CD4-positive, alpha-beta memory T cell (primary cell): ENCODE measurements at regions of chr1 and their contacts with region 1.

Region 1: GRCh38 chr1:39098546-39099250 is 72.5 kb downstream of the NDUFS5 start:
- DNase-seq: peak; percentile 69 to 83 (median 77)
- H3K4me3 ChIP-seq: no peak overlapping the region
- H3K4me3 Mint-ChIP-seq: peak overlapping the region in 2 of 8 donors; percentile 2 to 20
- H3K27ac ChIP-seq: no peak overlapping the region
- H3K27ac Mint-ChIP-seq: peak overlapping the region in 6 of 7 donors; percentile 3 to 90 (median 74)
- H3K4me1 ChIP-seq: peaks cover 14% of the 10 kb centered on the region
- H3K4me1 Mint-ChIP-seq: peaks cover 11 to 29% (median 15%) of the 10 kb centered on the region in 4 donors
- H3K27me3 ChIP-seq: no peaks in the 10 kb centered on the region
- H3K27me3 Mint-ChIP-seq: no peaks in the 10 kb centered on the region

Region 2: GRCh38 chr1:37636435-37636834 is 1462.3 kb before region 1 on chr1:
- CTCF ChIA-PET with region 1: no interaction called
- POLR2A ChIA-PET with region 1: no interaction called
- intact Hi-C with region 1: no loop called
- DNase-seq: no peak
- H3K4me3 ChIP-seq: no peak overlapping the region
- H3K4me3 Mint-ChIP-seq: no peak overlapping the region
- H3K27ac ChIP-seq: no peak overlapping the region
- H3K27ac Mint-ChIP-seq: no peak overlapping the region
- H3K4me1 ChIP-seq: no peaks in the 10 kb centered on the region
- H3K4me1 Mint-ChIP-seq: peaks cover 7 to 22% (median 12%) of the 10 kb centered on the region in 4 donors
- H3K27me3 ChIP-seq: peaks cover 39% of the 10 kb centered on the region
- H3K27me3 Mint-ChIP-seq: peaks cover 38 to 51% of the 10 kb centered on the region in 2 donors

Region 3: DNA sequence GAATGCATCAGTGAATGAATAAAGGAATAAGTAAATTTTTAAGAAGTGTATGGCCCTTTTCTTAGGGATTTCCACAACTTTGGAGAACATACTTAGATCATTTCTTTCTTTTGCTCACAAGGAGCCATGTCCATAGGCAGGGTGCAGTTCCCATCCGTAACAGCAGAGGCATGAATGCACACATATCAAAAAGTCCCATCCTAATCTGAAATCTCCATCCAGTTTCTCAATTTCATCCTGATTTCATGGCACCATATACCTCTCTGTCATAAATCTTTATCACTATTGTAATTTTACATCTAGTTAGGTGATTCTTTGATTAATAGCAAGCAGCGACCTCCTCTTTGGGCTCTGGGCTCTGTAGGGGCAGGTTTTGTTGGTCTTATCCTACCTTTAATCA is 598.3 kb before region 1 on chr1:
- CTCF ChIA-PET with region 1: no interaction called
- POLR2A ChIA-PET with region 1: no interaction called
- intact Hi-C with region 1: no loop called
- DNase-seq: no peak
- H3K4me3 ChIP-seq: no peak overlapping the region
- H3K4me3 Mint-ChIP-seq: no peak overlapping the region
- H3K27ac ChIP-seq: no peak overlapping the region
- H3K27ac Mint-ChIP-seq: no peak overlapping the region
- H3K4me1 ChIP-seq: no peaks in the 10 kb centered on the region
- H3K4me1 Mint-ChIP-seq: peaks cover 0 to 2% (median under 1%) of the 10 kb centered on the region in 4 donors
- H3K27me3 ChIP-seq: peaks cover 10% of the 10 kb centered on the region
- H3K27me3 Mint-ChIP-seq: peaks cover 12 to 30% of the 10 kb centered on the region in 2 donors

Region 4: GRCh38 chr1:39183503-39184353 is 85.0 kb after region 1 on chr1:
- CTCF ChIA-PET with region 1: interaction called, 94 read pairs
- POLR2A ChIA-PET with region 1: interaction called, 4 read pairs
- intact Hi-C with region 1: loop called (anchors 2 kb)
- DNase-seq: peak; percentile 83 to 95 (median 87)
- H3K4me3 ChIP-seq: no peak overlapping the region
- H3K4me3 Mint-ChIP-seq: peak overlapping the region in 5 of 8 donors; percentile 8 to 53 (median 35)
- H3K27ac ChIP-seq: peak overlapping the region; percentile 70
- H3K27ac Mint-ChIP-seq: peak overlapping the region; percentile 90 to 98 (median 96)
- H3K4me1 ChIP-seq: peaks cover 34% of the 10 kb centered on the region
- H3K4me1 Mint-ChIP-seq: peaks cover 18 to 44% (median 30%) of the 10 kb centered on the region in 4 donors
- H3K27me3 ChIP-seq: no peaks in the 10 kb centered on the region
- H3K27me3 Mint-ChIP-seq: no peaks in the 10 kb centered on the region

Region 5: GRCh38 chr1:39258146-39258924 is 159.6 kb after region 1 on chr1:
- CTCF ChIA-PET with region 1: interaction called, 21 read pairs
- POLR2A ChIA-PET with region 1: no interaction called
- intact Hi-C with region 1: loop called (anchors 1 kb)
- DNase-seq: peak; percentile 54 to 71 (median 61)
- H3K4me3 ChIP-seq: no peak overlapping the region
- H3K4me3 Mint-ChIP-seq: peak overlapping the region in 1 of 8 donors; percentile 22
- H3K27ac ChIP-seq: peak overlapping the region; percentile 27
- H3K27ac Mint-ChIP-seq: peak overlapping the region; percentile 41 to 88 (median 81)
- H3K4me1 ChIP-seq: peaks cover 36% of the 10 kb centered on the region
- H3K4me1 Mint-ChIP-seq: peaks cover 20 to 42% (median 30%) of the 10 kb centered on the region in 4 donors
- H3K27me3 ChIP-seq: no peaks in the 10 kb centered on the region
- H3K27me3 Mint-ChIP-seq: no peaks in the 10 kb centered on the region

Region 6: DNA sequence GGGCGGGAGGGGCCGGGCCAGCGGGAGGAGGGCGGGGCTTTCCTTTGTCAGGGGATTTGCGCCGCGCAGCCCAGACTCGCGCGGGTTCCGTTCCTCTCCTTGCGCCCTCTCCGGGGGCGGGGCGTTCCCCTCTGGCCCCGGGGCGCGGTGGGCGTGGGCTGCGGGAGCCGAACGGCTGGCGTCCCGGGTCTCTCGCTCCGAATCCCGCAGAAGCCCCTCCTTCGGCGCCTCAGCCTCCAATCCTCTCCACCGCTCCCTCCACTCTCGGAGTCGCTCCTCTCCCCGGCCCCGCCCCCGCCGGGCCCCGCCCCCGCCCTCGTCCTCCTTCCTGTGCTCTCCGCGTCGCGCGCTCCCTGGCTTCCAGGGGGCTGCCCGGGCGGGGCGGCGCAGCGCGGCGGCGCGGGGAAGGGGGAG is 309.9 kb after region 1 on chr1:
- CTCF ChIA-PET with region 1: interaction called, 11 read pairs
- POLR2A ChIA-PET with region 1: no interaction called
- intact Hi-C with region 1: loop called (anchors 1 kb)
- DNase-seq: peak; percentile 73 to 90 (median 77)
- H3K4me3 ChIP-seq: peak overlapping the region in 1 of 2 donors; percentile 59
- H3K4me3 Mint-ChIP-seq: peak overlapping the region in 7 of 8 donors; percentile 54 to 93 (median 92)
- H3K27ac ChIP-seq: peak overlapping the region; percentile 58
- H3K27ac Mint-ChIP-seq: peak overlapping the region in 1 of 7 donors; percentile 66
- H3K4me1 ChIP-seq: peaks cover 63% of the 10 kb centered on the region
- H3K4me1 Mint-ChIP-seq: peaks cover 46 to 72% (median 60%) of the 10 kb centered on the region in 4 donors
- H3K27me3 ChIP-seq: no peaks in the 10 kb centered on the region
- H3K27me3 Mint-ChIP-seq: no peaks in the 10 kb centered on the region

Region 7: GRCh38 chr1:39653546-39654031 is 554.9 kb after region 1 on chr1:
- CTCF ChIA-PET with region 1: interaction called, 6 read pairs
- POLR2A ChIA-PET with region 1: no interaction called
- intact Hi-C with region 1: loop called (anchors 1 kb)
- DNase-seq: peak; percentile 65 to 74 (median 71)
- H3K4me3 ChIP-seq: no peak overlapping the region
- H3K4me3 Mint-ChIP-seq: peak overlapping the region in 1 of 8 donors; percentile 3
- H3K27ac ChIP-seq: no peak overlapping the region
- H3K27ac Mint-ChIP-seq: no peak overlapping the region
- H3K4me1 ChIP-seq: peaks cover 5% of the 10 kb centered on the region
- H3K4me1 Mint-ChIP-seq: peaks cover 4 to 11% (median 8%) of the 10 kb centered on the region in 4 donors
- H3K27me3 ChIP-seq: no peaks in the 10 kb centered on the region
- H3K27me3 Mint-ChIP-seq: peaks cover 2 to 7% of the 10 kb centered on the region in 2 donors